WTC11 (cell line): ENCODE measurements at regions of chr21 and their contacts with region 1.

Region 1: DNA sequence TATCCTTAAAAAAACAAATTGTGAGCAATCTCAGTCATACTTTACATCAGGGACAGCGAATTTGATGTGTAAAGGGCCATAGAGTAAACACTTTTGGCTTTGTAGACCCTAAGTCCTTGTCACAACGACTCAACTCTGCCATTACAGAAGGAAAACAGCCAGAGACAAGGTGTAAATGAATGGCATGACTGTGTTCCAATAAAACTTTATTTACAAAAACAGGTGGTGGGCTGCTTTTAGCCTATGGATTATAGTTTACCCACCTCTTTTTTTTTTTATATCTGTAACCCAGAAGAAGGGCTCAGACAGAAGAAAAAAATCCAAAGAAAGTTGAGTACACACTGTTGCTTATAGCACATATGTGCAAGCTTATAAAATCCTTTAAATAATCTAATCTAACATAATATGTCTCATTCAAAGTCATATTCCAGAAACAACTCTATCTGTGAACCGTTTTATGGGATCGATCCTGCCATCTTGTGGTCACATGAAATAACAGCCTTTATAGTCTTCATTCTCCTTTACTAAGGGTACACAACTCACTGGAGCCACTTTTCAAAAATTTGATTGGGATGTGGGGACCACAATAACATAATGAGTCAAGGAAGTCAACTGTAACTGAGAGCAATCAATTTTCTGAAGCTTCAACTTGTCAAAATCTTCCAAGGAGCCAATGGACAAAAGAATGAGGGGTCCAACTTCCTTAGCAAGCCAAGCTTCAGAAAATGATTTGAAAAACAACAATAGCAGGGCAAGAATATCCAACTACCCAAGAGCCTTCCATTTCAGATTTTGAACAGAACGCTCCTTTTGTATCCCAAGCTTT is 142.2 kb upstream of the KRTAP19-8 start:
- DNase-seq: no peak
- ATAC-seq: peak; percentile 57
- H3K4me3 Mint-ChIP-seq: no peak overlapping the region
- H3K27ac Mint-ChIP-seq: peak overlapping the region; percentile 53; the same call in 1 of the 2 replicates
- H3K4me1 Mint-ChIP-seq: peaks cover 11% of the 10 kb centered on the region; the same call in 1 of the 2 replicates
- H3K27me3 Mint-ChIP-seq: no peaks in the 10 kb centered on the region
- CTCF ChIP-seq: peak; percentile 37; the same call in 1 of the 2 replicates

Region 2: DNA sequence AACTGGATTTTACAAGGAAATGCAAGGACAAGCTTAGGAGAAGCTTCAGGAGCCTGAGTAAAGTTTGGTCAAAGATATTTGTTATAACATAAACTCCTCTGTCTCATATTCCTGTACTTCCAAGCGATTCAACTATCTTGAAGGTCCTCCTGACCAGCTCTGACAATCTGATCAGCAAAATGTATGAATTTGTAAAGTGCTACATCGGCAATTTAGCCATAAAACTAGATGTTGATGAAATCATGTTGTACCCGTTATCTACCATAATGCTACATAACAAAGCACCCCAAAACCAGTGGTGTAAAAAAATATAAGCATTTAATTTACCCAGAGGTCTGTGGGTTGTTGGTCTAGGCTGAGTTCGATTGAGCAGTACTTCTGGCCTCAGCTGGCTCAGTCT is 279.6 kb before region 1 on chr21:
- CTCF ChIA-PET with region 1: no interaction called
- POLR2A ChIA-PET with region 1: no interaction called
- DNase-seq: no peak
- ATAC-seq: no peak
- H3K4me3 Mint-ChIP-seq: no peak overlapping the region
- H3K27ac Mint-ChIP-seq: no peak overlapping the region
- H3K4me1 Mint-ChIP-seq: peaks cover 41% of the 10 kb centered on the region
- H3K27me3 Mint-ChIP-seq: no peaks in the 10 kb centered on the region
- CTCF ChIP-seq: no peak

Region 3: DNA sequence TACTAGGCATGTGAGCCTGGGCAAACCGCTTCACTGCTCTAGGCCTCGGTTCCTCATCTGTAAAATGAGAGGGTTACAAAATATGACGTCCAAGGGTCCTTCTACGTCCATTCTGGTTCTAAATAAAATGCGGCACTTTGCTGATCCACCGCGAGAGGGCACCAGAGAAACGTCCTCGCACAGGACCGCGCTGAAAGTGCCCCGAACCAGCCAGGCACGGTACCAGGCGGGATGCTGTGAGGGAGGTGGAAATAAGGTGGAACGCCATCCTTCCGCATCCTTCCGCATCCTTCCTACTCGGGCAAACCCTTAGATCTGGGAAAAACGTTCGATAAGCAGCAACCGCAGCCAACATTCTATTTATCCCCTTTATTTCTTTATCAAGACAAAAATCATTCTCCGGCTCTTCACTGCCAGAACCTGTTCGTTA is 81.9 kb before region 1 on chr21:
- CTCF ChIA-PET with region 1: interaction called, 14 read pairs
- POLR2A ChIA-PET with region 1: no interaction called
- DNase-seq: peak; percentile 84
- ATAC-seq: peak; percentile 90
- H3K4me3 Mint-ChIP-seq: no peak overlapping the region
- H3K27ac Mint-ChIP-seq: no peak overlapping the region
- H3K4me1 Mint-ChIP-seq: peaks cover 10% of the 10 kb centered on the region
- H3K27me3 Mint-ChIP-seq: no peaks in the 10 kb centered on the region; the same call in 1 of the 2 replicates
- CTCF ChIP-seq: peak; percentile 64

Region 4: DNA sequence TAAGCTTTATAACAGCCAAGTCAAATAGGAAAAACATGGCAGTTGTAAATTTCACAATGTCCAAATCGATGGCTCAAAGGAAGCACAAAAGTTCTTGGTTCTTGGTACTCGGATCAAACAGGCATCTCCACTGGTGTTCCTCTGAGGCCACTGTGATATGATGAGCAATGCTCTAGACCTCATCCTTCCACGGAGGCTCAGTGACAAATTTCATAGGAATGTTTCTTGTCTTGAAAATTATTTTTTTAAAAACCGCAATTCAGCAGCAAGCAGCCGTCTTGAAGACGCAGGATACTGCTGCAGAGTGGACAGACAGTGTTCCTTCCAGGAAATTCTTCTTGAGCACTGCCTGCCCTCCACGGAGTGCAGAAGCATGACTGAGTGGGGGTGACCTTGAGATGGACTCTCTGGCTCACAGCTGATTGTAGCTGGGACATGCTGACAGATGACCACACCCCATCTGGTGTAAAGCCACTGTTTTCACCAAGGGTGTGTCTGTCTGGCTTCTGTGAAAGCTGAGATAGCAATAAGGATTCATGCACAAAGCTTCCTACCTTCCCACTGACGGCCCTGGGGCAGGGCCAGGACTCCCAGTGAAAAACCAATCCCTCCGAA is 101.7 kb after region 1 on chr21:
- CTCF ChIA-PET with region 1: no interaction called
- POLR2A ChIA-PET with region 1: no interaction called
- DNase-seq: no peak
- ATAC-seq: no peak
- H3K4me3 Mint-ChIP-seq: no peak overlapping the region
- H3K27ac Mint-ChIP-seq: no peak overlapping the region
- H3K4me1 Mint-ChIP-seq: peaks cover 39% of the 10 kb centered on the region
- H3K27me3 Mint-ChIP-seq: no peaks in the 10 kb centered on the region
- CTCF ChIP-seq: no peak

Region 5: GRCh38 chr21:31343680-31344480 is 163.4 kb after region 1 on chr21 and contains the start of gene TIAM1:
- CTCF ChIA-PET with region 1: no interaction called
- POLR2A ChIA-PET with region 1: no interaction called
- DNase-seq: peak; percentile 49
- ATAC-seq: peak; percentile 92
- H3K4me3 Mint-ChIP-seq: peak within 1 kb of the TSS; percentile 86
- H3K27ac Mint-ChIP-seq: peak within 1 kb of the TSS; percentile 66
- H3K4me1 Mint-ChIP-seq: peaks cover 38% of the 10 kb centered on the region
- H3K27me3 Mint-ChIP-seq: no peaks in the 10 kb centered on the region
- CTCF ChIP-seq: no peak
- total RNA-seq, gene TIAM1: 25.2 to 28.7 TPM (median 28.2 TPM) in 3 replicates